ENCODE measurements at regions of chr16 and their contacts with region 1.

Region 1: DNA sequence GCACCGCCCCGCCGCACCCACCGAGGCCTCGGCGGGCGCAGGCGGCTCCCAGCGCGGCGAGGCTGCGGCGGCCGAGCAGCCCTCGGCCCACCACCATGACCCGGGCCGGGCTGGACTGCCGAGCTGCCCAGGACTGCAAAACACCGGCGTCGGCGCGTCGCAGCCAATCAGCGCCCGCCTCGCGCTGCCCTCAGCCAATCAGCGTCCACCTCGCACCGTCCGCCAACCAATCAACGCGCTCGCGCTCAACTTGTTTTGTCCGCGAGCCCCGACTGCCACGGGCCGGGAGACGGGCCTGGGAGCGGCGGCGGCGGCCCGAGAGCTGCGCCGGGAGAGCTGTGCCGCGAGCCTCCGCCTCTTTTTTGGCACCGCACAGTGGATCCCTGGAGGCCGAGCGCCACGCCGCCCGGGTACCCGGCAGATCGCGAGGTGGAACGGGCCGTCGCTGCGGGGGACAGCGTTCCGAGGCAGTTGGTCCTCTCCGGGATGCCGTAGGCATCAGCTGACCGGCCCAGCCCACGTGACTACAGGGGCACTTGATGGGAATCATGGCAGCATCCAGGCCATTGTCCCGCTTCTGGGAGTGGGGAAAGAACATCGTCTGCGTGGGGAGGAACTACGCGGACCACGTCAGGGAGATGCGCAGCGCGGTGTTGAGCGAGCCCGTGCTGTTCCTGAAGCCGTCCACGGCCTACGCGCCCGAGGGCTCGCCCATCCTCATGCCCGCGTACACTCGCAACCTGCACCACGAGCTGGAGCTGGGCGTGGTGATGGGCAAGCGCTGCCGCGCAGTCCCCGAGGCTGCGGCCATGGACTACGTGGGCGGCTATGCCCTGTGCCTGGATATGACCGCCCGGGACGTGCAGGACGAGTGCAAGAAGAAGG is at the starts of genes FAHD1 and HAGH:
- DNase-seq: peak; percentile 99
- H3K4me3 ChIP-seq: peak within 1 kb of the TSS; percentile 79 to 97 (median 90)
- H3K27ac ChIP-seq: peak within 1 kb of the TSS; percentile 90 to 94 (median 92)
- H3K4me1 ChIP-seq: peaks cover 46 to 70% (median 56%) of the 10 kb centered on the region in 4 donors
- H3K27me3 ChIP-seq: no peaks in the 10 kb centered on the region
- CTCF ChIP-seq: no peak
- EP300 ChIP-seq: no peak
- POLR2A ChIP-seq: no peak
- total RNA-seq, gene FAHD1: 20.4 to 43.2 (median 39.5) TPM
- total RNA-seq, gene HAGH: 148 to 264 (median 180) TPM

Region 2: GRCh38 chr16:1543085-1543896 is 283.6 kb before region 1 on chr16:
- intact Hi-C with region 1: no loop called
- DNase-seq: no peak
- H3K4me3 ChIP-seq: no peak overlapping the region
- H3K27ac ChIP-seq: peak overlapping the region; percentile 81 to 89 (median 84)
- H3K4me1 ChIP-seq: peaks cover 77 to 100% (median 93%) of the 10 kb centered on the region in 4 donors
- H3K27me3 ChIP-seq: no peaks in the 10 kb centered on the region
- CTCF ChIP-seq: no peak
- EP300 ChIP-seq: no peak
- POLR2A ChIP-seq: no peak

Region 3: DNA sequence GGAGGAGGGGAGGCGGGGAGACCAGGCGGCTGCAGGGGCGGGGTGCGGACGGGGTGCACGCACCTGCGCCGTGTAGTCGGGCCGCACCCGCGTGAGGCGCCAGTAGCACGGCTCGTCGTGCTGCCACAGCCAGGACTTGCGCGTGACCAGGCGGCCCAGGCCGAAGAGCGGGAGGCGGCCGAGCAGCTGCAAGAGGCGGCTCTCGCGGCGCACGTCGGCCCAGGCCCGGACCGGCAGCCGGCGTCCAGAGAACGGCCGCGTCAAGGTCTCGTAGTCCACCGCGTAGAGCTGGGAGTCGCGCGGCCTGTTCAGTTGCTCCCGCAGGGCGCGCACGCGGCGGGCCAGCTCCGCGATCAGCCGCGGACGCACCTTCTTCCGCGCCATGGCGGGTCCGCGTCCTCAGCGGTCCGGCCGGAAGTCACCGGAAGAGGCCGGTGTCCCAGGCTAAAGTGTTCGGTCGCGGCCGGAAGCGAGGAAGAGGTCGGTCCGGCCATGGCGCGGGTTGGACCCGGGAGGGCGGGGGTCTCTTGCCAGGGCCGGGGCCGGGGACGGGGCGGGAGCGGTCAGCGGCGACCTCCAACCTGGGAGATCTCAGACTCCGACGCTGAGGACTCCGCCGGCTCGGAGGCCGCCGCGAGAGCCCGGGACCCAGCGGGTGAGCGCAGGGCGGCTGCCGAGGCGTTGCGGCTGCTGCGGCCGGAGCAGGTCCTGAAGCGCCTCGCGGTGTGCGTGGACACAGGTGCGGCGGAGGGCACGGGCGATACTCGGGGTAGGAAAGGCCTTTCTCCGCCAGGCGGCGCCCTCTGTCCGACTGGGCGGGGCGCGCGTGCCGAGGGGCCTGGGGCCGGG is 54.0 kb before region 1 on chr16 and contains the starts of genes EME2 and MRPS34:
- intact Hi-C with region 1: loop called (anchors 1 kb)
- DNase-seq: no peak
- H3K4me3 ChIP-seq: peak within 1 kb of the TSS; percentile 72 to 100 (median 88)
- H3K27ac ChIP-seq: peak within 1 kb of the TSS; percentile 87 to 95 (median 90)
- H3K4me1 ChIP-seq: peaks cover 36 to 64% (median 57%) of the 10 kb centered on the region in 4 donors
- H3K27me3 ChIP-seq: no peaks in the 10 kb centered on the region
- CTCF ChIP-seq: peak; percentile 67 to 75 (median 72)
- EP300 ChIP-seq: no peak
- POLR2A ChIP-seq: no peak
- total RNA-seq, gene EME2: 5.5 to 10.4 (median 6.5) TPM
- total RNA-seq, gene MRPS34: 47.1 to 75.2 (median 64.2) TPM

Region 4: GRCh38 chr16:1782352-1783091 is 44.4 kb before region 1 on chr16 and contains the starts of genes NUBP2 and SPSB3:
- intact Hi-C with region 1: loop called (anchors 5 kb)
- DNase-seq: peak; percentile 100
- H3K4me3 ChIP-seq: peak within 1 kb of the TSS; percentile 92 to 99 (median 96)
- H3K27ac ChIP-seq: peak within 1 kb of the TSS; percentile 87 to 99 (median 90)
- H3K4me1 ChIP-seq: peaks cover 30 to 76% (median 55%) of the 10 kb centered on the region in 4 donors
- H3K27me3 ChIP-seq: no peaks in the 10 kb centered on the region
- CTCF ChIP-seq: peak in 1 of 3 experiments; percentile 14
- EP300 ChIP-seq: no peak
- POLR2A ChIP-seq: no peak
- total RNA-seq, gene NUBP2: 82.7 to 93.8 (median 87.6) TPM
- total RNA-seq, gene SPSB3: 69.1 to 101 (median 78.6) TPM